Aorta (tissue), 5 donors: ENCODE measurements at regions of chr20 and their contacts with region 1.

Region 1: DNA sequence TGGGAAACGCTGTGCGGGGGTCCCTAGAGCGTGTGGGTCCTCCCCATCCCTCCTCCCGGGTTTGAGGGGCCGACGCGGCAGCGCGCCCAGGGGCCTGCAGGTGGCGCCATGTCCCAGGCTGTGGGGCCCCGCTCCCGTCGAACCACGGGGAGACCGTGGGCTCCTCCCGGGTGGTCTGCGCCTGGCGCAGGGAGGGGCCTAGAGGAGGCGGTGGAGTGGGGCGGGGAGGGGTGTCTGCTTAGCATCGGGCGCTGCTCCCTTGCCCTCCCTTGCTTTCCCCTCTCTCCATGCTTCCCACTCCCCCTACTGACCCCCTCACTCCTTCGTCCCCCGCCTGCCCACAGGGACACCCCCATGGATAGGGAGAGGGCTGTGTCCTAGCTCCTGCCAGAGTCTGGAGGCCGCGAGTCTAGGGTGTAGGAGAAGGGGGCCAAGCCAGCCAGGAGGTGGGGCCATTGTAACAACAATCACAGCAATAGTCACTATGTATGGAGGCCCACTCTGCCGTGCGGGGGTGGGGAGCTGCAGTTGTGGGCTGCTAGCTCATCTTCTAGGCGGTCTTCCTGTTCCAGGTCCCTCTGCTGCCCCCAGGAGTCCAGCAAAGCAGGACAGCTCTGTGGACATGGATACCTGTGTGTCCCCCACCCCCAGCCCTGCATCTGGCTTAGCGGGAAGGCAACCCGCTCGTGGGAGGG is 51.7 kb downstream of the CHMP4B start:
- DNase-seq: peak; percentile 64 to 87
- ATAC-seq: peak; percentile 73
- H3K4me3 ChIP-seq: no peak overlapping the region
- H3K27ac ChIP-seq: no peak overlapping the region
- H3K4me1 ChIP-seq: no peaks in the 10 kb centered on the region
- H3K27me3 ChIP-seq: no peaks in the 10 kb centered on the region

Region 2: GRCh38 chr20:33475381-33476150 is 387.3 kb before region 1 on chr20:
- intact Hi-C with region 1: no loop called
- DNase-seq: no peak
- ATAC-seq: no peak
- H3K4me3 ChIP-seq: no peak overlapping the region
- H3K27ac ChIP-seq: no peak overlapping the region
- H3K4me1 ChIP-seq: no peaks in the 10 kb centered on the region
- H3K27me3 ChIP-seq: no peaks in the 10 kb centered on the region

Region 3: GRCh38 chr20:33606118-33606771 is 256.6 kb before region 1 on chr20:
- intact Hi-C with region 1: no loop called
- DNase-seq: no peak
- ATAC-seq: no peak
- H3K4me3 ChIP-seq: no peak overlapping the region
- H3K27ac ChIP-seq: no peak overlapping the region
- H3K4me1 ChIP-seq: no peaks in the 10 kb centered on the region
- H3K27me3 ChIP-seq: no peaks in the 10 kb centered on the region

Region 4: GRCh38 chr20:34069341-34070078 is 206.7 kb after region 1 on chr20:
- intact Hi-C with region 1: loop called (anchors 1 to 5 kb)
- DNase-seq: peak; percentile 62 to 82
- ATAC-seq: peak; percentile 88
- H3K4me3 ChIP-seq: no peak overlapping the region
- H3K27ac ChIP-seq: no peak overlapping the region
- H3K4me1 ChIP-seq: peaks cover 4 to 6% of the 10 kb centered on the region in 2 donors
- H3K27me3 ChIP-seq: no peaks in the 10 kb centered on the region

Region 5: DNA sequence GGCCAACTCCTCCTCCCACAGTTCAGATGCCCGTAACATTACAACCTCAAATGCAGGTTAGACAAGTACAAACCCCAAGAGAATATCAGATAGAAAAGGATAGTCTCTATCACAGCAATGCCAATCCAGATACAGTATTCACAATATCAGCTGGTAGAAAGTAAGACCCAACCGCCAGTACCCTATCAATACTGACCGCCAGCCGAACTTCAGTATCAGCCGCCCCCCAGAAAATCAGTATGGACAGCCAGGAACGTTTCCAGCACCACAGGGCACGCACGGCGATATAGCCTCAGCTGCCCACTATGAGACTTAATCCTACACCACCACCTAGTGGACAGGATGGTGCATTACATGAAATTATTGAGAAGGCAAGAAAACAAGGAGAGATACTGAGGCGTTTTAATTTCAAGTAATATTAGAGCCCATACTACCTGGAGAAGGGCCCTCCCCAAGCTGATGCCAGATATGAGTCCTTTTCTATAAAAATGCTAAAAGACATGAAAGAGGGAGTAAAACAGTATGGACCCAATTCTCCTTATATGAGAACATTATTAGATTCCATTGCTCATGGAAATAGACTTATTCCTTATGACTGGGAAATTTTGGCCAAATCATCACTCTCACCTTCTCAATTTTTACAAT is 266.8 kb after region 1 on chr20:
- intact Hi-C with region 1: loop called (anchors 2 to 5 kb)
- DNase-seq: peak; percentile 61 to 81
- ATAC-seq: peak; percentile 91
- H3K4me3 ChIP-seq: no peak overlapping the region
- H3K27ac ChIP-seq: no peak overlapping the region
- H3K4me1 ChIP-seq: no peaks in the 10 kb centered on the region
- H3K27me3 ChIP-seq: no peaks in the 10 kb centered on the region